Caco-2 (cell line): ENCODE measurements at regions of chr9 and their contacts with region 1.

Region 1: GRCh38 chr9:133356391-133357091 is at the starts of genes SURF1 and SURF2:
- DNase-seq: peak; percentile 86 to 93
- H3K4me3 ChIP-seq: peak within 1 kb of the TSS; percentile 62
- H3K4me3 Mint-ChIP-seq: peak within 1 kb of the TSS; percentile 86
- H3K27ac Mint-ChIP-seq: peak within 1 kb of the TSS; percentile 88
- H3K4me1 ChIP-seq: peaks cover 14% of the 10 kb centered on the region
- H3K4me1 Mint-ChIP-seq: peaks cover 20% of the 10 kb centered on the region
- H3K27me3 ChIP-seq: no peaks in the 10 kb centered on the region
- H3K27me3 Mint-ChIP-seq: no peaks in the 10 kb centered on the region
- CTCF ChIP-seq: peak in 1 of 2 experiments; percentile 52
- total RNA-seq, gene SURF1: 54.9 and 57.5 TPM in 2 replicates
- total RNA-seq, gene SURF2: 32.3 and 34.4 TPM in 2 replicates

Region 2: DNA sequence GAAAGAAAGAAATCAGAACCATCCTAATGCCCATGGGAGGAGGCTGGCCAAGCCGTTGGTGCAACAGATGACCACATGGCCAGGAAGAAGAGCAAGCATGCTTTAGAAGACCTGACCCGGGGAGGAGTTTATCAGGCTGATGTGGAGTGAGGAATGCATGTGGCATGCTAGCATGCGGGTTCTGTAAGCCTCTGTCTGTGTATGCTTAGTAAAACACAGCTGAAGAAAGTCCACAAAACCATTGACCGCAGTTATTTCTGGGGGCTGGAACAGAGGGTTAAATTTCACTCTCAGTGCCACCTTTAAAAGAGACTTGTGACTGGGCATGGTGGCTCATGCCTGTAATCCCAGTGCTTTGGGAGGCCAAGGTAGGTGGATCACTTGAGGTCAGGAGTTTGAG is 358.9 kb before region 1 on chr9:
- CTCF ChIA-PET with region 1: no interaction called
- POLR2A ChIA-PET with region 1: no interaction called
- intact Hi-C with region 1: no loop called
- DNase-seq: peak; percentile 55 to 72
- H3K4me3 ChIP-seq: no peak overlapping the region
- H3K4me3 Mint-ChIP-seq: no peak overlapping the region
- H3K27ac Mint-ChIP-seq: no peak overlapping the region
- H3K4me1 ChIP-seq: peaks cover 23% of the 10 kb centered on the region
- H3K4me1 Mint-ChIP-seq: peaks cover 15% of the 10 kb centered on the region
- H3K27me3 ChIP-seq: no peaks in the 10 kb centered on the region
- H3K27me3 Mint-ChIP-seq: no peaks in the 10 kb centered on the region
- CTCF ChIP-seq: no peak

Region 3: GRCh38 chr9:133320421-133320881 is 36.1 kb before region 1 on chr9:
- CTCF ChIA-PET with region 1: no interaction called
- POLR2A ChIA-PET with region 1: no interaction called
- intact Hi-C with region 1: no loop called
- DNase-seq: no peak
- H3K4me3 ChIP-seq: no peak overlapping the region
- H3K4me3 Mint-ChIP-seq: no peak overlapping the region
- H3K27ac Mint-ChIP-seq: no peak overlapping the region
- H3K4me1 ChIP-seq: no peaks in the 10 kb centered on the region
- H3K4me1 Mint-ChIP-seq: no peaks in the 10 kb centered on the region
- H3K27me3 ChIP-seq: no peaks in the 10 kb centered on the region
- H3K27me3 Mint-ChIP-seq: no peaks in the 10 kb centered on the region
- CTCF ChIP-seq: peak in 1 of 2 experiments; percentile 13

Region 4: DNA sequence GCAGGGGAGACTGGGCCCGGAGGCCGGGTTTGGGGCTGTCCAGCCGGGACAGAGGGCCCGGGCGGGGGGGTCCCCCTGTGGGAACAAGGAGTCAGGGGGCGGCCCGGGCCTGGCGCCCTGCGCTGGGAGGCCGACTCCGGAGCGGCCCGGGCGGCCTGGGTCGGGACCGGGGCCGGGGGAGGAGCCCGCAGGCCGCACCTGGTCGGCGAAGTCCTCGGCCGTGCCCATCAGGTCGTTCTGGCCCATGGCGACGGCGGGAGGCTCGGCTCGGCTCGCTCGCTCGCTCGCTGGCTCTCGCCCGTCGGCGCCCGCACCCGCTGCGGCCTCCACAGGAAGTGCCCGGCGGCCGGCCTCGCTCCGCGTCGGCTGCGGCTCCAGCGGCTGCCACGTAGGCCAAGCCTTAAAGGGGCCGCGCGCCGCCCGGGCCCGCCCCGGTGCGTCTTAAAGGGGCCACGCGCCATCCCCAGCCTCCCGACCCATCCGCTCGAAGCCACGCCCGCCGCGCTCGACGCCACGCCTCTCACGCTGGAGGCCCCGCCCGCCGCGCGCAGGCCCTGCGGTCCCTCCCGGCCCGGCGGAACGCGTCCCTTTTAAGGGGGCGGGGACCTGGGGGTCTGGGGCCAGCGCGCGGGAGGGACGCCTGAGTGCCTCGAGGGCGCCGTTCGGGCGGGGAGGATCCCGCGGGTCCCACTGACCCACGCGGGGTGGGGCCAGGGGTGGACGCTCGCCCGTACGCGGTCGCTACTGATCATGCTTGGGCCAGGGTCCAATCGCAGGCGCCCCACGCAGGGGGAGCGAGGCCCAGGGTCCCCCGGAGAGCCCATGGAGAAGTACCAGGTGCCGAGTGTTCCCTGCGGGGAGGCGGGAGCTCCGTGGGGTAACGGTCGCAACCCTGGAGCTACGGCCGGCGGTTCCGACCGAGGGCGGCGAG is 19.4 kb after region 1 on chr9 and contains the starts of genes STKLD1 and SURF4:
- CTCF ChIA-PET with region 1: interaction called, 3 read pairs
- POLR2A ChIA-PET with region 1: no interaction called
- intact Hi-C with region 1: loop called (anchors 2 kb)
- DNase-seq: peak; percentile 95 to 98
- H3K4me3 ChIP-seq: peak within 1 kb of the TSS; percentile 84
- H3K4me3 Mint-ChIP-seq: peak within 1 kb of the TSS; percentile 89
- H3K27ac Mint-ChIP-seq: peak within 1 kb of the TSS; percentile 96
- H3K4me1 ChIP-seq: peaks cover 6% of the 10 kb centered on the region; the same call in 1 of the 2 replicates
- H3K4me1 Mint-ChIP-seq: peaks cover 8% of the 10 kb centered on the region
- H3K27me3 ChIP-seq: no peaks in the 10 kb centered on the region
- H3K27me3 Mint-ChIP-seq: no peaks in the 10 kb centered on the region
- CTCF ChIP-seq: no peak
- total RNA-seq, gene STKLD1: 3.4 and 4.1 TPM in 2 replicates
- total RNA-seq, gene SURF4: 239 and 253 TPM in 2 replicates

Region 5: DNA sequence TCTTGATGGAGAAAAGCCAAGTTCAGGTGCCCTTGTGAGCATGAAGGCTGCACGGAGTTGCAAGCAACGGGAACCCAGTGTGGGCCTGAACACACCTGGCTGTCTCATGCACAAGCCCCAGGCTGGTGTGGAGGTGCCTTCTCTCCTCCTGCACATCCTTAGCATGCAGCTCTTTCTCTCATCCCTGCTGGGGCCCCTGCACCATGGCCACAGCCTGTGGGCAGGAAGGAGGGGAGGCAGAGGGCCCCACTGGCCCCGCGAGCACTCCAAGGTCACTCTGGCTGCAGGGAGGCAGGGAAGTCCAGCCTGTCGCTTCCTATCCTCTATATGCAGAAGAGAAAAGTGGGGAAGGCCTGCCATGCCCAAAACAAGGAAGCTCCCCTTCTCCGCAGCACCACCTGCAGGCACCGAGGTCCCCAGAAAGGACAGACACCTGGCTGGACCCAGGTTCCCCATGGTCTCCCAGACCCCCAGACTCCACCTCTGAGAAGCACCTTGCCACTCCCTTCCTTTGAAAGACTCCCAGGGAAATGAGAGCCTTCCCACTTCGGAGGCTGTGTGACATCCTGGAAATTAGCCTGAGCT is 38.2 kb after region 1 on chr9:
- CTCF ChIA-PET with region 1: interaction called, 4 read pairs
- POLR2A ChIA-PET with region 1: no interaction called
- intact Hi-C with region 1: loop called (anchors 2 kb)
- DNase-seq: no peak
- H3K4me3 ChIP-seq: no peak overlapping the region
- H3K4me3 Mint-ChIP-seq: no peak overlapping the region
- H3K27ac Mint-ChIP-seq: no peak overlapping the region
- H3K4me1 ChIP-seq: peaks cover 17% of the 10 kb centered on the region
- H3K4me1 Mint-ChIP-seq: peaks cover 2% of the 10 kb centered on the region
- H3K27me3 ChIP-seq: no peaks in the 10 kb centered on the region
- H3K27me3 Mint-ChIP-seq: no peaks in the 10 kb centered on the region
- CTCF ChIP-seq: peak in 1 of 2 experiments; percentile 12

Region 6: DNA sequence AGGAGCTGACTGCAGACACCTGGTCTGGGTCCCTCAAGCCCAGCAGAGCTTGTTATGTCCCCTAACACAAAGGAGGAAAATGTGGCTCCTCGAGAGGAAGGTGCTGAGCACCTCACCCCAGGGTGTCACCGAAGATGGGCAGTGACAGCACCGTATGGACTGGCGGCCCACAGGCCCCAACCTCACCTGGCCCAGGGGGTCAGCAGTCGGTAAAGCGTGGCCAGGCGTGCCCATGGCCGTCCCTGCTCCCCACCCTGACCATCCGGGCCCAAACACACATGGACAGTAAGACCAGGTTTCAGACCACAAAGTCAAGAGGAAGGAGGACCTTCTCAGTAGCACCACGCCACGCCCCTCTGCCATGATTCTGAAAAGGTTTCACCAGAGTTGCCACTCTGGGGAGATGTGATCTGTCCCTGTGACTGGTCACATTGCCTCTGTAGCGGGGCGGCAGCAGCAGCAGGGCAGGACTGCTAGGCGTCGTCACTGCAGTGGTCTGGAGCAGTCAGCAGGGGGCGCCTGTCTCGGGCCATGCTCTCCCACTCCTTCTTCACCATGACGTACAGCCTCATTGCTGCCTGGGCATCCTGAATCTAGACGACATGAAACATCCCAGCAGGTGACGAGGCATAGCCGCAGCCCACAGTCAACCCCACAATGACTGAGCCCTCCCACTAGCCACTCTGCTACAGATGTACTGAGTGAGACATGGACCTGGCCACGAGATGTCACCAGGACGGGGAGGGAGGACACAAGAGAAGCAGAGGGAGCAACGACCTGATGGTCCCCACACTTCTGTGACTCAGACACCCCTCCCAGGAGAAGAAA is 50.2 kb after region 1 on chr9:
- CTCF ChIA-PET with region 1: interaction called, 5 read pairs
- POLR2A ChIA-PET with region 1: no interaction called
- intact Hi-C with region 1: loop called (anchors 1 kb)
- DNase-seq: peak; percentile 76 to 81
- H3K4me3 ChIP-seq: no peak overlapping the region
- H3K4me3 Mint-ChIP-seq: no peak overlapping the region
- H3K27ac Mint-ChIP-seq: no peak overlapping the region
- H3K4me1 ChIP-seq: no peaks in the 10 kb centered on the region
- H3K4me1 Mint-ChIP-seq: no peaks in the 10 kb centered on the region
- H3K27me3 ChIP-seq: no peaks in the 10 kb centered on the region
- H3K27me3 Mint-ChIP-seq: no peaks in the 10 kb centered on the region
- CTCF ChIP-seq: peak; percentile 89 to 92

Region 7: DNA sequence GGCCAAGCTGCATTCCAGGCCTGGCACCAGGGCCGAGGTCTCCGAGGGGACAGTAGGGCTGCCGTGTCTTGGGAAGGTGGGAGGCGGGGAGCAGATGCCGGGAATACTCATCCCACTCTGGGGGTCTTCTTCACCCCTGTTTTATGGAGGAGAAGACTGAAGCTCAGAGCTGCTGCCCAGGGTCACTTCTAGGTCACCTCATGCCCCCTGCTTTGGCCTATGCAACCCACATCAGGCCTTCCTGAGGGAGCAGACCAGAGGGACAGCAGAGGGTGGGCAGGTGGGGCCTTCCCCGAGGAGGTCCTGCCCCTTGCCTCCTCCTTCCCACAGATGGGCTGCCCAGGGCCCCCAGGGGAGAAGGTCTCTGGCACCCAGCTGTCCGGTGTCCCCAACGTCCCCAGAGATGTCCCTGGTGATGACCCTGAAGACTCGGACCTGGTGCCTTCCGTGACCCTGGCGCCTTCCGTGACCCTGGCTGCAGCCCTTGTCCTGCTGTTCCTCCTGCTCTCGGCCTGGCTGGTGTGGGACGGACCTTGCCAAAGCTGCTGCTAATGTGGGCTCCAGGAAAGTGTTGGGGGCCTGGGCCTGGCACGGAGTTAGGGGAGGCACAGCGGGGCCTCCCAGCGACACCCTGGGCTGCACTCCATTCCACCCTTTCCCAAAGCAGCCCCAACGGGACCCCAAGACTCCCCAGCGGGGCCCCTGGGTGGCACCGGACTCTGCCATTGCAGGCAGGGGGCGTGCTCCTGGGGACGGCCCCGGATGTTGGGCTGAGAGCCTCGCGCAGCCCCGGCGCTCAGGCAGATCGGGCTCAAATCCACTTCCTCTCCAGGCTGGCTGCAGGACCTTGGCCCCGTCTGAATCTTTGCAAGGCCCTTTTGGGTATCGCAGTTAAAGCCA is 129.1 kb after region 1 on chr9:
- CTCF ChIA-PET with region 1: interaction called, 4 read pairs
- POLR2A ChIA-PET with region 1: no interaction called
- intact Hi-C with region 1: loop called (anchors 1 kb)
- DNase-seq: no peak
- H3K4me3 ChIP-seq: no peak overlapping the region
- H3K4me3 Mint-ChIP-seq: no peak overlapping the region
- H3K27ac Mint-ChIP-seq: no peak overlapping the region
- H3K4me1 ChIP-seq: peaks cover 11% of the 10 kb centered on the region; the same call in 1 of the 2 replicates
- H3K4me1 Mint-ChIP-seq: peaks cover 7% of the 10 kb centered on the region
- H3K27me3 ChIP-seq: no peaks in the 10 kb centered on the region
- H3K27me3 Mint-ChIP-seq: peaks cover 3% of the 10 kb centered on the region
- CTCF ChIP-seq: no peak

Region 8: GRCh38 chr9:133527444-133527920 is 170.9 kb after region 1 on chr9:
- CTCF ChIA-PET with region 1: no interaction called
- POLR2A ChIA-PET with region 1: no interaction called
- intact Hi-C with region 1: no loop called
- DNase-seq: no peak
- H3K4me3 ChIP-seq: no peak overlapping the region
- H3K4me3 Mint-ChIP-seq: no peak overlapping the region
- H3K27ac Mint-ChIP-seq: no peak overlapping the region
- H3K4me1 ChIP-seq: peaks cover 4% of the 10 kb centered on the region
- H3K4me1 Mint-ChIP-seq: peaks cover 6% of the 10 kb centered on the region
- H3K27me3 ChIP-seq: no peaks in the 10 kb centered on the region
- H3K27me3 Mint-ChIP-seq: no peaks in the 10 kb centered on the region
- CTCF ChIP-seq: no peak